T-cell (primary cell): ENCODE measurements at regions of chr11 and their contacts with region 1.

Region 1: DNA sequence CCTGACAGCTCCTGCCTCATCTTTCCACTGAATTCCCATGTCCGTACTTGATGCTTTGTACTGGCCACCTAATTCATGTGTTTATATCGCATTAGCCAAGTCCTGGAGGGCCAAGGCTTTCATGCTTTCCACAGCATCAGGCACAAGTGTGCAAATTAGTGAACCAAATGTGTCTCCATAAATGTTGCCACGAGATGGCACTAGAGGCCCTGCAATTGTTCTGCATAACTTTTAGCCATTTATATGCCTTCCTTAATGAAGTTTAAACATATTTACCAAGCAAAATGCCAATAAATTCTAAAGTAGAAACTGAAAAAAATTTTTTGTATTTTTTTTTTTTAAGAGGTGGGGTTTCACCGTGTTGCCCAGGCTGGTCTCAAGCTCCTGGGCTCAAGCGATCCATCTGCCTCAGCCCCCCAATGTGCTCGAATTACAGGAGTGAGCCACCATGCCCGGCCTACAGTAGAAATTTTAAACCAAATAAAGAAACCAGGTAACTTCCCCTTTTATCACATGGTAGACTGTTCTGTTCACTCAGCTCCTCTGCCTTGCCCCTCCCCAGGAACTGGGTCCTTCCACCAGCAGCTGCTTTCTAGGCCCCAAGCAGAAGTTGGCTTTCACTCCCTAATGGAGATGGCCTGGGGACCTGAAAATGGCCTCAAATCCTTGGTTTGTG is 20.8 kb upstream of the IL18BP start:
- DNase-seq: peak in 29 of 35 experiments; percentile 15 to 73 (median 40)
- ATAC-seq: peak; percentile 52 to 63 (median 57)
- H3K4me3 ChIP-seq: no peak overlapping the region
- H3K4me3 Mint-ChIP-seq: no peak overlapping the region
- H3K27ac ChIP-seq: no peak overlapping the region
- H3K27ac Mint-ChIP-seq: no peak overlapping the region
- H3K4me1 ChIP-seq: no peaks in the 10 kb centered on the region
- H3K4me1 Mint-ChIP-seq: peaks cover 0 to 4% (median 0%) of the 10 kb centered on the region in 3 donors
- H3K27me3 ChIP-seq: no peaks in the 10 kb centered on the region
- H3K27me3 Mint-ChIP-seq: no peaks in the 10 kb centered on the region

Region 2: GRCh38 chr11:72058416-72059034 is 80.6 kb after region 1 on chr11:
- CTCF ChIA-PET with region 1: no interaction called
- POLR2A ChIA-PET with region 1: no interaction called
- DNase-seq: no peak
- ATAC-seq: no peak
- H3K4me3 ChIP-seq: no peak overlapping the region
- H3K4me3 Mint-ChIP-seq: no peak overlapping the region
- H3K27ac ChIP-seq: no peak overlapping the region
- H3K27ac Mint-ChIP-seq: no peak overlapping the region
- H3K4me1 ChIP-seq: no peaks in the 10 kb centered on the region
- H3K4me1 Mint-ChIP-seq: peaks cover 0 to 6% (median 0%) of the 10 kb centered on the region in 3 donors
- H3K27me3 ChIP-seq: no peaks in the 10 kb centered on the region
- H3K27me3 Mint-ChIP-seq: no peaks in the 10 kb centered on the region

Region 3: DNA sequence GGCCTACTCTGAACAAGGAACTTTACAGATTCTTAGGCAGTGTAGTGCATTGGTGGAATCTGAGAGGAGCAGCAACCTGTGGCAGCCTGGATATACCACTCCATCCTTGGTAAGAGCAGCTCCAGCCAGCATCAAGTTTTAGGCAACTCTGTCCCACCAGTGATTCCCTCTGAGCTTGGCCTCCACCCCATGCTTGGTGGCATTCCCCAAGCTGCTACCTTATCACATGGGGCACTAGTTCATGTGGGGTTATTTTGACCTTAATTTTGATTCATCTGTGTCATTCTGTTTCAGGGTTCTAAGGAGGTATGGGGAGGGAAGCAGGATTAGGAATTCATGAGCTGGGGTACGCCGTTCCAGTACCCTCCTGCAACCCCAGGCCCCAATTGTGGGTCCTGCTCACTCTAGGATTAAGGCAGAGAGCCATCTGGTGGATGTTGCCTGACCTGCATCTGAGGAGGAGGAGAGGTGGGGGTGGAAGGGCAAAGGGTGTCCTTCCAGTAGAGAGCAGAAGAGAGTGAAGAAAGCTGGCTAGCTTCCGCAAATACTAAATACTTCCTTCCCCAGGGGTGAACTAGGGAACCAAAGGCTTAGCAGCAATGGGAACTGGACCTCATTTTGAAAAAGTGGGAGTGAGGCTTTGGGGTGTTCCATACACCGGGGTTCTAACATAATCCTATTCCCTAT is 113.3 kb after region 1 on chr11:
- CTCF ChIA-PET with region 1: interaction called, 5 to 10 read pairs
- POLR2A ChIA-PET with region 1: no interaction called
- DNase-seq: peak; percentile 43 to 82 (median 67)
- ATAC-seq: peak; percentile 89 to 99 (median 90)
- H3K4me3 ChIP-seq: no peak overlapping the region
- H3K4me3 Mint-ChIP-seq: no peak overlapping the region
- H3K27ac ChIP-seq: no peak overlapping the region
- H3K27ac Mint-ChIP-seq: peak overlapping the region; percentile 6 to 70
- H3K4me1 ChIP-seq: peaks cover 0 to 4% of the 10 kb centered on the region in 2 experiments
- H3K4me1 Mint-ChIP-seq: peaks cover 10 to 12% (median 11%) of the 10 kb centered on the region in 3 donors
- H3K27me3 ChIP-seq: no peaks in the 10 kb centered on the region
- H3K27me3 Mint-ChIP-seq: no peaks in the 10 kb centered on the region

Region 4: DNA sequence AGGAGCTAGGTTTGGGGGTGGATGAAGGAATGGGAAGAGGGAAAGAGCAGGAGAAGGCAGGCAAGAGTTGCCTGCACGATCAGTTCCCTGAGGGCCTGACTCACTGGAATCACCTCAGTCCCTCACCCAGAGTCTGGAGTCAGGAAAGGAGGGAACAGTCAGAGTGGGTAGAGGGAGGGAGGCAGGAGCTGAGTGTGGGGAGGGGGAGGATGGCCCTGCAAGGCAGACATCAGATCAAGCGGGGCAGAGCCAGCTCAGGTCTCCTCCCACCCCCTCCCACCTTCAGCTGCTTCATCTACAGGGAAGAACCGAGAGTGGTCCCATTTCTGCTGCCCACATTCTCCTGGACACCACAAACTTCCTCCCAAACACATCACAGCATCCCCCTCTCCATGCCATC is 637.4 kb after region 1 on chr11:
- CTCF ChIA-PET with region 1: no interaction called
- POLR2A ChIA-PET with region 1: interaction called in 1 of 2 experiments, 16 read pairs
- DNase-seq: no peak
- ATAC-seq: no peak
- H3K4me3 ChIP-seq: no peak overlapping the region
- H3K4me3 Mint-ChIP-seq: no peak overlapping the region
- H3K27ac ChIP-seq: no peak overlapping the region
- H3K27ac Mint-ChIP-seq: no peak overlapping the region
- H3K4me1 ChIP-seq: peaks cover 0 to 17% of the 10 kb centered on the region in 2 experiments
- H3K4me1 Mint-ChIP-seq: peaks cover 3 to 21% (median 3%) of the 10 kb centered on the region in 3 donors
- H3K27me3 ChIP-seq: peaks cover 0 to 57% of the 10 kb centered on the region in 2 experiments
- H3K27me3 Mint-ChIP-seq: peaks cover 23 to 33% of the 10 kb centered on the region in 2 donors